MCF 10A (cell line): ENCODE measurements at regions of chr20 and their contacts with region 1.

Region 1: DNA sequence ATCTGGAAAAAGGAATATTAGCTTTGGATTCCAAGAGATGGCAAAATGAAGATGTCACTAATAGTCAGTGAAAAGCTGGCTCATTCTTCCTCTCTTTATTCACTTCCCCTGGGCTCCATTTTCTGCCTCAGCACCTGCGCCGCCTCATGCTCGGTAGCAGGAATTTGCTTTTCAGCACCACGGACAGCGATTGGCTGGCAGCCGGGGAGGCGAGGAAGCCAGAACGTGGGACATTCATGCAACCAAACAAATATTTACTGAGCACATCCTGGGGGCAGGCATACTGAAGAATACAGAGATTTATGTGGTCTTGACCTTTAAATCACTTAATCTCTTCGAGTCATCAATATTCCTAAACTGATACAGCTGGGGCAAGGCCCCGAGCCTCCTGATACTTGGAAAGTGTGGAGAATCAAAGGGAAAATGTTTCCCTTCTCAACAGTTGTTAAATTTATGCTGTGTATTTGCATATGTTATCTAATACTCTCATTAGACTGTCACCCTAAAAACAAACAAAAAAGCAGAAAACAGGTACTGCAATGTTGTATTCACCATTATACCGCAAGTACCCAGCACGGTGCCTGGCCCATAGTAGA is 12.1 kb upstream of the PDYN start:
- DNase-seq: peak; percentile 63
- H3K4me3 Mint-ChIP-seq: no peak overlapping the region
- H3K27ac Mint-ChIP-seq: no peak overlapping the region
- H3K4me1 Mint-ChIP-seq: no peaks in the 10 kb centered on the region
- H3K27me3 Mint-ChIP-seq: peaks cover 46% of the 10 kb centered on the region
- CTCF ChIP-seq: no peak

Region 2: GRCh38 chr20:2022163-2022562 is 16.2 kb after region 1 on chr20:
- CTCF ChIA-PET with region 1: interaction called, 22 read pairs
- POLR2A ChIA-PET with region 1: interaction called, 5 read pairs
- intact Hi-C with region 1: no loop called
- DNase-seq: peak; percentile 92
- H3K4me3 Mint-ChIP-seq: no peak overlapping the region
- H3K27ac Mint-ChIP-seq: no peak overlapping the region
- H3K4me1 Mint-ChIP-seq: no peaks in the 10 kb centered on the region
- H3K27me3 Mint-ChIP-seq: peaks cover 71% of the 10 kb centered on the region
- CTCF ChIP-seq: no peak

Region 3: DNA sequence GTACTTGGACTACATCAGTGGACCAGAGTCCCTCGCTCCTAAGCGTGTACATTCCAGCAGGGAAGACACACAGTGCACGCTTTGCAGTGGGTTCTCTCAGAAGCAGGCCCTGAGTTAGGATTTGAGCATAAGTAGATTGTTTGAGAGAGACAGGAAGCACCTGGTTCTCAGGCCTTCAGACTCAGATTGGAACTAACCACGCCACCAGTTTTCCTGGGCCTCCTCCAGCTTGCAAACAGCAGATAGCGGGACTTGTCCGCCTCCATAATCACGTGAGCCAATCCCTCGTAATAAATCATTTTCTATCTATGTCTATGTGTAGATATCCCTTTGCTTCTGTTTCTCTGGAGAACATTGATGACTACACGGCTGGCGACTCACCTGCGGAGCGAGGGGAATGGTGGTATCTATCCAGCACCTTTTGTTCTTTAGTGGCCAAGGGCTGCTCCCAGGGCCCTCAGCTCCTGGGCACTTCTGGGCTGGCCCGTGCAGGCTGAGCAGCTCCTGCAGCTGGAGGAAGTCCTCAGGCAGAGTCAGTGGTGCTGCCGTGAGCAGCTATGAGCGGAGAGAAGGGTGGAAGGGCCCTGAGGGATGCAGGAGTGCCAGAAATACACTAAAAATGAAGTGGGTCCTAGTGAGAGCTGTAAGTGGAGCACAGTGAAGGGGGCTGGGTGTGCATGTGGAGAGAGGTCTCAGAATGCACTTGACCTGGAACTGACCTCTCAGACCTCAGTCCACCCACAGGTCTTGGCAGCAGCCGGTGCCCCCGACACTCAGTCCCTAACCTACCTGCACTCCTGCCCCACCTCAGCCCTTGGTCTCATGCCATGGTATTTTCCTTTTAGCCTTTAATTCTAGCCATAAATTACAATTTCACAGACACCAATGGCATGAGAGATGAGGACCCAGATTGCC is 172.6 kb after region 1 on chr20:
- CTCF ChIA-PET with region 1: interaction called, 37 read pairs
- POLR2A ChIA-PET with region 1: no interaction called
- intact Hi-C with region 1: no loop called
- DNase-seq: no peak
- H3K4me3 Mint-ChIP-seq: no peak overlapping the region
- H3K27ac Mint-ChIP-seq: no peak overlapping the region
- H3K4me1 Mint-ChIP-seq: no peaks in the 10 kb centered on the region
- H3K27me3 Mint-ChIP-seq: peaks cover 26% of the 10 kb centered on the region
- CTCF ChIP-seq: no peak